ENCODE measurements at regions of chr15 and their contacts with region 1.

Region 1: DNA sequence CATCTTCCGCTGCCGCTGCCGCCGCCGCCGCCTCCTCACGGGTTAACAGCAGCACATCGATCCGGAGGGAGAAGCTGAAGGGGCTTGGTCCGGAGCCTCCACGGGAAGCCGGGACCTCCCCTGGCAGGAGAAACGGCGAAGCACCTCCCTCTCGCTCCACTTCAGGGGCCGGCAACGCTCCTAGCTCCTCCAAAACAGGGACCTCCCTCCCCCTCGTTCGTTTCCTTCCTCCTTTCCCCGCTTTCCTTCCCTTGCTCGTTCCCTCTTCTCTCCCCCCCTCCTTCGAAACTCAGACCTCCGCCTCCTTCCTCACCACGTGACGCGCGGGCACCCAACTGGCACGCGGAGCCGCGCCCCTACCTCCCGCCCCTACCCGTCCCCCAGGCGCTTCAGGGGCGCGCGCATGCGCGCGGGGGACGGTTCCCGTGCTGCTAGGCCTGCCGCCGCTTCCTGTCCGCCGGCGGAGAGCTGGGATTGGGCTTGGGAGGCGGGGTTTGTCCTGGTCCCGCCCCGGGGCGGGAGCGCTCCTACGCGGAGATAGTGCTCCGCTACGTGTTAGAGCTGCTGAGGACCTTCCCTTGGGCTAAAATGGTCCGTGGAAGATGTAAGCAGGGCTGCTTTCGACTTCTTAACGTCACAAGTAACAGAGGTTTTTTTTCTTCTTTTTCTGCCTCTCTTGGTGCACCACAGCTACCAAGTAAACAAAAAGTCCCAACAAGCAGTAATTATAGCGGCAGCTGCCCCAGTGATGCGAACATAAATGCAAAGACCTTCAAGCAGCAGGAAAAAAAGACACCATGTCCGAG is at the start of gene ADAM10:
- DNase-seq: peak; percentile 99 to 100
- H3K4me3 ChIP-seq: peak within 1 kb of the TSS; percentile 78 to 85 (median 78)
- H3K27ac ChIP-seq: peak within 1 kb of the TSS; percentile 93 to 96 (median 95)
- H3K4me1 ChIP-seq: peaks cover 11 to 21% of the 10 kb centered on the region in 2 donors
- H3K27me3 ChIP-seq: no peaks in the 10 kb centered on the region
- CTCF ChIP-seq: no peak
- POLR2A ChIP-seq: peak; percentile 59 to 92
- total RNA-seq, gene ADAM10: 112 to 157 (median 116) TPM

Region 2: GRCh38 chr15:58269455-58270414 is 480.0 kb before region 1 on chr15:
- intact Hi-C with region 1: loop called (anchors 5 kb)
- DNase-seq: peak; percentile 25 to 42
- H3K4me3 ChIP-seq: no peak overlapping the region
- H3K27ac ChIP-seq: no peak overlapping the region
- H3K4me1 ChIP-seq: no peaks in the 10 kb centered on the region
- H3K27me3 ChIP-seq: no peaks in the 10 kb centered on the region
- CTCF ChIP-seq: peak; percentile 45 to 78 (median 68)
- POLR2A ChIP-seq: no peak

Region 3: GRCh38 chr15:58510715-58511598 is 238.8 kb before region 1 on chr15:
- intact Hi-C with region 1: no loop called
- DNase-seq: no peak
- H3K4me3 ChIP-seq: no peak overlapping the region
- H3K27ac ChIP-seq: no peak overlapping the region
- H3K4me1 ChIP-seq: peaks cover 5 to 7% of the 10 kb centered on the region in 2 donors
- H3K27me3 ChIP-seq: no peaks in the 10 kb centered on the region
- CTCF ChIP-seq: no peak
- POLR2A ChIP-seq: no peak

Region 4: GRCh38 chr15:58690703-58691102 is 59.0 kb before region 1 on chr15:
- intact Hi-C with region 1: loop called (anchors 10 kb)
- DNase-seq: no peak
- H3K4me3 ChIP-seq: no peak overlapping the region
- H3K27ac ChIP-seq: no peak overlapping the region
- H3K4me1 ChIP-seq: peaks cover 7 to 14% of the 10 kb centered on the region in 2 donors
- H3K27me3 ChIP-seq: no peaks in the 10 kb centered on the region
- CTCF ChIP-seq: no peak
- POLR2A ChIP-seq: no peak

Measured in thyroid gland (tissue), 4 donors.